Activated CD4-positive, alpha-beta memory T cell treated with anti-CD3 and anti-CD28 coated beads for 36 hours (primary cell): ENCODE measurements at regions of chr10 and their contacts with region 1.

Region 1: GRCh38 chr10:113678690-113679462 is 836 bp upstream of the CASP7 start:
- DNase-seq: peak; percentile 83
- H3K4me3 Mint-ChIP-seq: peak overlapping the region; percentile 84
- H3K27ac Mint-ChIP-seq: peak overlapping the region; percentile 78
- H3K4me1 Mint-ChIP-seq: peaks cover 38% of the 10 kb centered on the region
- H3K27me3 Mint-ChIP-seq: peaks cover 3% of the 10 kb centered on the region

Region 2: DNA sequence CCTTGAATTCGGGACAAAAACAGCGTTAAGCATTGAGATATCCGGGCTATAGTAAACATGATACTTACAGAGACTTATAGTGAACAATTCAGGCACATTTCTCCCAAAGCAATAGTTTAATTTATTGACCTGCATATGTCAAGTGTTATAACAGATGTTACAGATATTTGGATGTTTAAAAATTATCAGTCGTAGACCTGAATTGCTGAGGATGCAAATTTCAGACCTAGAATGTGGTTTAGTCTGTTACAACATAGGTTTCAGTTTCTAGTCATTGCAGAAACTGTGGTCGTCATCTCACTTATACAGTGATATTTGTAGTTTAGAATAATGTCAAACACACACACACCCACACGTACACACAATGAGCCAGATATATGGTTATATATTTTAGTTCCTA is 1146.7 kb before region 1 on chr10:
- CTCF ChIA-PET with region 1: no interaction called
- POLR2A ChIA-PET with region 1: no interaction called
- intact Hi-C with region 1: loop called (anchors 10 kb)
- DNase-seq: peak; percentile 12
- H3K4me3 Mint-ChIP-seq: peak overlapping the region; percentile 39
- H3K27ac Mint-ChIP-seq: no peak overlapping the region
- H3K4me1 Mint-ChIP-seq: peaks cover 27% of the 10 kb centered on the region
- H3K27me3 Mint-ChIP-seq: peaks cover 2% of the 10 kb centered on the region

Region 3: GRCh38 chr10:113412161-113412560 is 266.7 kb before region 1 on chr10:
- CTCF ChIA-PET with region 1: no interaction called
- POLR2A ChIA-PET with region 1: no interaction called
- intact Hi-C with region 1: no loop called
- DNase-seq: no peak
- H3K4me3 Mint-ChIP-seq: no peak overlapping the region
- H3K27ac Mint-ChIP-seq: no peak overlapping the region
- H3K4me1 Mint-ChIP-seq: no peaks in the 10 kb centered on the region
- H3K27me3 Mint-ChIP-seq: peaks cover 6% of the 10 kb centered on the region

Region 4: GRCh38 chr10:113616233-113617074 is 62.4 kb before region 1 on chr10:
- CTCF ChIA-PET with region 1: no interaction called
- POLR2A ChIA-PET with region 1: no interaction called
- intact Hi-C with region 1: no loop called
- DNase-seq: no peak
- H3K4me3 Mint-ChIP-seq: no peak overlapping the region
- H3K27ac Mint-ChIP-seq: no peak overlapping the region
- H3K4me1 Mint-ChIP-seq: no peaks in the 10 kb centered on the region
- H3K27me3 Mint-ChIP-seq: peaks cover 31% of the 10 kb centered on the region

Region 5: GRCh38 chr10:113704637-113705343 is 25.9 kb after region 1 on chr10:
- CTCF ChIA-PET with region 1: interaction called, 8 read pairs
- POLR2A ChIA-PET with region 1: interaction called, 4 read pairs
- intact Hi-C with region 1: loop called (anchors 1 kb)
- DNase-seq: peak; percentile 32
- H3K4me3 Mint-ChIP-seq: no peak overlapping the region
- H3K27ac Mint-ChIP-seq: no peak overlapping the region
- H3K4me1 Mint-ChIP-seq: peaks cover 27% of the 10 kb centered on the region
- H3K27me3 Mint-ChIP-seq: no peaks in the 10 kb centered on the region

Region 6: DNA sequence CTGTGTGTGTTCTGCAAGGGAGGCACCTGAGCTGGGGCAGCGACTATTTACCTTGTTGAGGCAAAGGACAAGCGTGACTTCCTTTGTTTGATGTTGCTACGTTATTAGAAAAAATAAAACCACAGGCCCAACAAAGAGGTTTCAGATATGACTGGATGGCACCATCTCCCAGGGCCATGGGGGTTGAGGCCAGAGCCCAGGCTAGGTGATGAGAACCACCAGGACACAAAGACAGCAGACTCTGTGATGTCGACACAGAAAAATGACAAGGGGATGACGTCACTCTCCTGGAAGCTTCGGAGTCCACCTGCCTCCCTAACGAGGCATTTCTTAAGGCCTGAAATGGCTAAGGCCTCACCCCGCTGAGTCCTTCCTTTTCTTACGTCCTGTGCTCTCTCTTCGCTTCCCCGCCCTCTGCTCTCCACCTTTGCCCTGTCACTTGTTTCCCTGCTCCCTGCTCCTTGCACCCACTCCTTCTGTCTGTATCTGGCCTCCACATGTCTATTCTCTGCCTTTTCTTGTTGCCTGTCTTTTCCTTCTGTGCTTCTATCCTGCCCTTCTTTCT is 281.8 kb after region 1 on chr10:
- CTCF ChIA-PET with region 1: no interaction called
- POLR2A ChIA-PET with region 1: no interaction called
- intact Hi-C with region 1: loop called (anchors 1 kb)
- DNase-seq: peak; percentile 62
- H3K4me3 Mint-ChIP-seq: no peak overlapping the region
- H3K27ac Mint-ChIP-seq: peak overlapping the region; percentile 70
- H3K4me1 Mint-ChIP-seq: peaks cover 43% of the 10 kb centered on the region
- H3K27me3 Mint-ChIP-seq: peaks cover 1% of the 10 kb centered on the region

Region 7: GRCh38 chr10:114121031-114121430 is 442.2 kb after region 1 on chr10:
- CTCF ChIA-PET with region 1: no interaction called
- POLR2A ChIA-PET with region 1: no interaction called
- intact Hi-C with region 1: no loop called
- DNase-seq: no peak
- H3K4me3 Mint-ChIP-seq: no peak overlapping the region
- H3K27ac Mint-ChIP-seq: no peak overlapping the region
- H3K4me1 Mint-ChIP-seq: no peaks in the 10 kb centered on the region
- H3K27me3 Mint-ChIP-seq: no peaks in the 10 kb centered on the region

Region 8: GRCh38 chr10:114173921-114174694 is 495.2 kb after region 1 on chr10 and contains the start of gene CCDC186:
- CTCF ChIA-PET with region 1: interaction called, 3 read pairs
- POLR2A ChIA-PET with region 1: interaction called, 4 read pairs
- intact Hi-C with region 1: loop called (anchors 1 kb)
- DNase-seq: peak; percentile 99
- H3K4me3 Mint-ChIP-seq: peak within 1 kb of the TSS; percentile 93
- H3K27ac Mint-ChIP-seq: peak within 1 kb of the TSS; percentile 91
- H3K4me1 Mint-ChIP-seq: peaks cover 33% of the 10 kb centered on the region
- H3K27me3 Mint-ChIP-seq: no peaks in the 10 kb centered on the region
- total RNA-seq, gene CCDC186: 12.6 to 13.8 TPM

Region 9: DNA sequence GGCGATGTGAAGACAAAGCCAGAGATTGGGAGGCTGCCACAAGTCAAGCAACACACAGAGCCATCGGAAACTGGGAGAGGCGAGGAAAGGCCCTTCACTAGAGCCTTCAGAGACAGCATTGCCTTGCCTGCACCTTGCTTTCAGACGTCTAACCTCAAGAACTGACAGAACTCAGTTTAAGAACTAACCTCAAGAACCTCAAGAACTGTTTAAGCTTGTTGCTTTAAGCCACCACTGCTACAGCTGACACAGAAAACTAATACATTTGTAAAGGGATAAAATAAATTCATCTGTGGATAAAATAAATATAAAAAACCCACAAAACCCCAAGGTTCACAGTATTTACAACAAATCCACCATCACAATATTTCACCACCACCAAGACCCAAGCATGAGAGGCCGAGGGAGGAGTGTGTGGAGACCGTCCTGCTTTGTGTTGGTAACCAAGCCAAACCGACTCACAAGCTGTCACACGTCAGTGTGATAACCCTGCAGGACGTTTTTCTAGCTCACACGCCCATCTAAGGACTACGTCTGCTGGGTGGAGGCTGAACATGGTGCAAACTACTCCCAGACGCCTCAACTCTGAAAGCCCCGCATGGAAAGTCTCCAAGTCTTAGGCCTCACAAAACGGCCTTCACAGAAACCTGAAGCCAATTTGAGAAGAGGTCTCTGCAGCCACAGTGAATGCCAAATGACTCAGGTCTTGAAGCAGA is 862.4 kb after region 1 on chr10:
- CTCF ChIA-PET with region 1: no interaction called
- POLR2A ChIA-PET with region 1: no interaction called
- intact Hi-C with region 1: loop called (anchors 2 kb)
- DNase-seq: peak; percentile 86
- H3K4me3 Mint-ChIP-seq: peak overlapping the region; percentile 51
- H3K27ac Mint-ChIP-seq: peak overlapping the region; percentile 96
- H3K4me1 Mint-ChIP-seq: peaks cover 77% of the 10 kb centered on the region
- H3K27me3 Mint-ChIP-seq: no peaks in the 10 kb centered on the region